PC-9 (cell line): ENCODE measurements at regions of chr18 and their contacts with region 1.

Region 1: DNA sequence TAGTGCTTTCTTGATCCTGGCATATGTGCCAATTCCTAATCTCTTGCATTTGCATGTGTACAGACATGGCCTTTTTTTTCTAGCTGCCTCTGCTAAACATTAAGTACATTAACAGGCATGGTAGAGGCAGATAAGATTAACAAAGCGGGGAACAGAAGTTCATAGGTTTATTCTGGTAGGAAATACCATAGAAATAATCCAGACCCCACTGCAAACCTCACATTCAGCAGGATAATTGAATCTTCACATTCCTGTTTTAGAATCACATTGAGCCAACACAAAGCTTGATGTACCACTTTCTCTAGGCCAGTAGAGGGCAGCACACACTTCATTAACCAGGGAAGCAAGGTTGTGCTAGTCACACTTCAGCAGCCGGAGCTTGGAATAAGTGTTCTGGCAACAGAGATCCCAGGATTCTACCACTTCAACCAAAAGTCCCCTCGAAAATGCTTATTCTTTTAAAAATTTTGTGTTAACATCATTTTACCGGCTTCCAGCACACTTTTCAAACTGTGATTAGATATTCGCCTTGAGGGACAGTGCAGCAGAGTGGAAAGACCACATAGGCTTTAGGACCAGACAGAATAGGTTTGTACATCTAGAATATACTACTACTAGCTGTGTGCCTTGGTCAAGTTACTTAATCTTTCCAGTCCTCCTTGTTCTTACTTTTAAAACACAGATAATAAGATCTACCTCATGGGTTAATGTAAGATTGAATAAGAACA is 420.2 kb upstream of the CHST9 start:
- DNase-seq: peak in 1 of 2 experiments; percentile 39
- H3K4me3 ChIP-seq: no peak overlapping the region
- H3K27ac ChIP-seq: no peak overlapping the region
- H3K4me1 ChIP-seq: no peaks in the 10 kb centered on the region
- H3K27me3 ChIP-seq: no peaks in the 10 kb centered on the region
- CTCF ChIP-seq: peak; percentile 72

Region 2: GRCh38 chr18:27483276-27483675 is 122.0 kb before region 1 on chr18:
- CTCF ChIA-PET with region 1: interaction called, 12 read pairs
- POLR2A ChIA-PET with region 1: no interaction called
- intact Hi-C with region 1: no loop called
- DNase-seq: no peak
- H3K4me3 ChIP-seq: no peak overlapping the region
- H3K27ac ChIP-seq: no peak overlapping the region
- H3K4me1 ChIP-seq: no peaks in the 10 kb centered on the region
- H3K27me3 ChIP-seq: no peaks in the 10 kb centered on the region
- CTCF ChIP-seq: no peak

Region 3: DNA sequence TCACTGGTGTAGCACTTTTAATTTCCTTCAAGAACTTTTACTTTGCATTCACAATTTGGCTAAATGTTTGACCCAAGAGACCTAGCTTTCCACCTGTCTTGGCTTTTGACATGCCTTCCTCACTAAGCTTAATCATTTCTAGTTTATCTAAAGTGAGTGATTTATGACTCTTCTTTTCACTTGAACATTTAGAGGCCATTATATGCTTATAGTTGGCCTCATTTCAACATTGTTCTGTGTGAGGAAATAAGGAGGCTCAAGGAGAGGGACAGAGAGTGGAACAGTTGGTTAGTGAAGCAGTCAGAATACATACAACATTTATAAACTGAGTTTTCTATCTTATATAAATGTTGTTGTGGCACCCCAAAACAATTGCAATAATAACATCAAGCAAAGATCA is 1060.9 kb after region 1 on chr18:
- CTCF ChIA-PET with region 1: no interaction called
- POLR2A ChIA-PET with region 1: interaction called, 13 read pairs
- intact Hi-C with region 1: no loop called
- DNase-seq: no peak
- H3K4me3 ChIP-seq: no peak overlapping the region
- H3K27ac ChIP-seq: no peak overlapping the region
- H3K4me1 ChIP-seq: no peaks in the 10 kb centered on the region
- H3K27me3 ChIP-seq: no peaks in the 10 kb centered on the region
- CTCF ChIP-seq: no peak